ENCODE measurements at regions of chr1 and their contacts with region 1.

Region 1: GRCh38 chr1:51519048-51519864 is at the start of gene EPS15:
- DNase-seq: peak; percentile 90
- ATAC-seq: peak; percentile 83
- H3K4me3 Mint-ChIP-seq: peak within 1 kb of the TSS; percentile 88
- H3K27ac Mint-ChIP-seq: peak within 1 kb of the TSS; percentile 87
- H3K4me1 Mint-ChIP-seq: peaks cover 42% of the 10 kb centered on the region
- H3K27me3 Mint-ChIP-seq: no peaks in the 10 kb centered on the region
- total RNA-seq, gene EPS15: 75.7 to 77.1 TPM

Region 2: GRCh38 chr1:51569284-51570062 is 50.2 kb after region 1 on chr1:
- POLR2A ChIA-PET with region 1: interaction called, 13 read pairs
- DNase-seq: no peak
- ATAC-seq: peak; percentile 82
- H3K4me3 Mint-ChIP-seq: peak overlapping the region; percentile 60
- H3K27ac Mint-ChIP-seq: peak overlapping the region; percentile 88
- H3K4me1 Mint-ChIP-seq: peaks cover 37% of the 10 kb centered on the region
- H3K27me3 Mint-ChIP-seq: no peaks in the 10 kb centered on the region

Region 3: GRCh38 chr1:51636764-51637522 is 117.7 kb after region 1 on chr1:
- POLR2A ChIA-PET with region 1: no interaction called
- DNase-seq: no peak
- ATAC-seq: no peak
- H3K4me3 Mint-ChIP-seq: no peak overlapping the region
- H3K27ac Mint-ChIP-seq: no peak overlapping the region
- H3K4me1 Mint-ChIP-seq: peaks cover 5% of the 10 kb centered on the region
- H3K27me3 Mint-ChIP-seq: no peaks in the 10 kb centered on the region

Region 4: DNA sequence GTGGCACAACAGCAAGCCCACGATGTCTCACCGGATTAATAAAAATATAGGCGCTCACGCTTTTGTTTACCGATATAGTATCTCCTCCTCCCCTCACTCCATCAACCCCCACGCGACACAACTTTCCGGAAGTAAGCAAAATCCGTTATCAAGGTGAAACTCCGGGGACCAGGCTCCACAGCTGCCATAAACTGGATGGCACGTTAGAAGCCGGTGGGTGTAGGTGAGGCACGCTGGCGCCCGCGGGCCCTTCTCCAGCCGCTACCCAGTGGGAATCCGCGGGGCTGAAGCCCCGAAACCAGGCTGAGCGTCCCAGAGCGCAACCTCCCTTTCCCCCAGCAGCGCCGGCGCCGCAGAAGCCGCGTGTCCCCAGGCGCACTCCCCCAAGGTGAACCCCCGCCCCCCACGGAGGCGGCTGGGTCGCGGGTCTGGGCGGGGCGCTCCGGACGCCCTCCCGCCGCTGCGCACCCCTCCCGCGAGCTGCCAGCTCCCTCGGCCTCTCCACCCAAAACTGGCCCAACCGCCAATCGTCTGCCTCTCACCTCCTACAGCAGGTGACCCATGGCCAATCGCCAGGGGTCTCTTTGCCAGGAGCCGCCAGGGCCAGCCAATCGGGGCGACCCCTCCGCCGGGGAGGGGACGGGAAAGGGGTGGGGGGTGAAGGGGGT is 210.0 kb after region 1 on chr1:
- POLR2A ChIA-PET with region 1: interaction called, 11 read pairs
- DNase-seq: peak; percentile 93
- ATAC-seq: peak; percentile 98
- H3K4me3 Mint-ChIP-seq: peak overlapping the region; percentile 91
- H3K27ac Mint-ChIP-seq: peak overlapping the region; percentile 83
- H3K4me1 Mint-ChIP-seq: peaks cover 18% of the 10 kb centered on the region
- H3K27me3 Mint-ChIP-seq: no peaks in the 10 kb centered on the region

Region 5: DNA sequence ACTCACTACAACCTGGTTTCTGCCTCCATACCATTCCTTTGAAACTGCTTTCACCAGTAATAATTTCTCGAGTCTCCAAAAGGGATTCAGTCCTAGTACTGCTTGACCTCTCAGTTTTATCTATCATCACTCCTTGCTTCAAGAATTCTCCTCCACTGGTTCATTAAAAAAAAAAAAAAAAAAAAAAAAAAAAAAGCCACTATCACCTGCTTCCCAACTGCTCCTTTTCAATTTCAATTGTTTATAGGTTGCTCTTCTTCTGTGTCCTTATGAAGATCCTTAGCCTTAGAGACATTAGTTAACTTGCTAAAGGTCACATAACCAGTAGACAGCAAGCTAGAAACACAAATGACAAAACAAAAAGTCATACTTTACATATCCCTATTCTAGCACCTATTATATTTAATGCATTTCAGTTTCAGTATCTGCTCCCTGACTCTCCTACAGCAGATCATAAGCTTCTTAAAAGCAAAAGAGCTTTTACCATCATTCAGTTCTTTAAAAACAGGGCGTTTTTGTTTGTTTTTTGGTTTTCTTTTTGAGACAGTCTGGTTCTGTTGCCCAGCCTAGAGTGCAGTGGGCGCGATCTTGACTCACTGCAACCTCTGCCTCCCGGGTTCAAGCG is 352.2 kb after region 1 on chr1:
- POLR2A ChIA-PET with region 1: no interaction called
- DNase-seq: no peak
- ATAC-seq: no peak
- H3K4me3 Mint-ChIP-seq: no peak overlapping the region
- H3K27ac Mint-ChIP-seq: peak overlapping the region; percentile 50
- H3K4me1 Mint-ChIP-seq: peaks cover 49% of the 10 kb centered on the region
- H3K27me3 Mint-ChIP-seq: no peaks in the 10 kb centered on the region